ENCODE measurements at regions of chr1 and their contacts with region 1.

Region 1: DNA sequence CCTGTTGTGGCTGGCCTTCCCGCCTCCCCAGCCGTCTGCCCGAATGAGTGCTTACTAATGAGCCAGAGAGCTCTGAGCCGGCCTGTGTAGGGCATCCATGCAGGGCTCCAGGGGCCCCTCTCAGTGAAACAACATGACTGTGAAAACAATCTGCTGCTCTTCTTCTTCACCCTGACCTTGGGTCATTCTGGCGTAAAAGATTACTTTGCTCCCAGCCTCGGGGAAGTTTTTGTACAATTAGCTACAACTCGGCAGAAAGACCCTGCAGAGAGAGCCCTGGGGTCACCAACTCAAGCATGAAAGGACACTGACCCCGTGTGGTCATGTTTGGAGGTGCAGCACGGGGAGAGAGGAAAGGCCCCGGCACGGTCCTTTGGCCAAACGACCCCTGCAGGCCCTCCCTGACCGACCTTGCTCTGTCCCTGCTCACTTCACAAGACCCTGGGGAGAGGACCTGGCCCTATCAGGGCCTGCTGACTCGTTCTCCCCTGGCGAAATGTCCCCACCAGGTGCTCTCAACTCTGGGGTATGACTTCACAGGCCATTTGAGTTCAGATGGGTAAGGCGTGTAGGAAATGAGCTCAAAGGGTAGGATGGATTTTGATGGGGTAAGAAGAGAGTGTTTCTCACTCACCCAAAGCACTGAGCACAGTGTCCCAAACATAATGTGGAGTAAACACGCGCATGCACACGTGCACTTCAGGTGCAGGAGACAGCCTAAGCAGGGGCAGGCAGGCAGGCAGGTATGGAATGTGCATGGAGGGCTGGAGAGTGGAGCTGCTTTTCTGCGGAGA is 22.9 kb upstream of the FAM20B start:
- DNase-seq: peak; percentile 77
- H3K4me3 ChIP-seq: peak overlapping the region; percentile 22
- H3K27ac ChIP-seq: no peak overlapping the region
- H3K4me1 ChIP-seq: peaks cover 8% of the 10 kb centered on the region
- H3K27me3 ChIP-seq: no peaks in the 10 kb centered on the region
- CTCF ChIP-seq: peak; percentile 97

Region 2: GRCh38 chr1:178532392-178532791 is 470.4 kb before region 1 on chr1:
- intact Hi-C with region 1: loop called (anchors 10 kb)
- DNase-seq: peak; percentile 87
- H3K4me3 ChIP-seq: no peak overlapping the region
- H3K27ac ChIP-seq: peak overlapping the region; percentile 36
- H3K4me1 ChIP-seq: peaks cover 25% of the 10 kb centered on the region
- H3K27me3 ChIP-seq: no peaks in the 10 kb centered on the region
- CTCF ChIP-seq: peak; percentile 89

Region 3: DNA sequence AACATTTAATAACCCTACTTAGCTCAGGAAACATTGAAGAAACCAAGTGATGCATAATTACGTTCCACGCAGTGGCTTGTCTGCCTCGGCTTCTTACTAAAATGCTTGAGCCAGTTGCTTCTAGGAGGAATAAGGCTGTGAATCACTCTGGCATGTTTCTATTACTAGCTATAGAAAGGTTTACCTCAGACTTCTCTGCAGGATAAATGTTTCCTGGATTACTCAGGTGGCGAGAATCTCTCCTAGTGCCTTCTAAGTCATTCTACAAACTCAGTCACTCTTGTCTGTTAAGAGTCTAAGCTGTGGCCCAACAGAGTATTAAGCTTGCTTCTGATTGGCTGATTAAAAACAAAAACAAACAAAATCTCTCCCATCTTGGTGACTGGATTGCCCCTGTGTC is 369.7 kb before region 1 on chr1:
- intact Hi-C with region 1: no loop called
- DNase-seq: no peak
- H3K4me3 ChIP-seq: no peak overlapping the region
- H3K27ac ChIP-seq: peak overlapping the region; percentile 24
- H3K4me1 ChIP-seq: peaks cover 7% of the 10 kb centered on the region
- H3K27me3 ChIP-seq: no peaks in the 10 kb centered on the region
- CTCF ChIP-seq: no peak

Region 4: GRCh38 chr1:178810585-178810984 is 192.2 kb before region 1 on chr1:
- intact Hi-C with region 1: loop called (anchors 5 kb)
- DNase-seq: no peak
- H3K4me3 ChIP-seq: no peak overlapping the region
- H3K27ac ChIP-seq: no peak overlapping the region
- H3K4me1 ChIP-seq: peaks cover 16% of the 10 kb centered on the region
- H3K27me3 ChIP-seq: no peaks in the 10 kb centered on the region
- CTCF ChIP-seq: no peak

Measured in left ventricle myocardium inferior (tissue), 1 donor.